Activated CD4-positive, alpha-beta T cell treated with anti-CD3 and anti-CD28 coated beads, Interleukin-2, amount 10 ng/mL, durations not matched to agents 24 days and 14 days (primary cell): ENCODE measurements at regions of chr3 and their contacts with region 1.

Region 1: GRCh38 chr3:179071550-179072397 is at the start of gene ZMAT3:
- DNase-seq: peak; percentile 96
- H3K4me3 Mint-ChIP-seq: peak within 1 kb of the TSS; percentile 99
- H3K27ac Mint-ChIP-seq: peak within 1 kb of the TSS; percentile 96
- H3K4me1 Mint-ChIP-seq: peaks cover 35% of the 10 kb centered on the region
- H3K27me3 Mint-ChIP-seq: no peaks in the 10 kb centered on the region
- total RNA-seq, gene ZMAT3: 11.8 and 13.1 TPM in 2 replicates

Region 2: GRCh38 chr3:179021119-179021903 is 50.5 kb before region 1 on chr3:
- intact Hi-C with region 1: loop called (anchors 1 kb)
- DNase-seq: no peak
- H3K4me3 Mint-ChIP-seq: peak overlapping the region; percentile 65
- H3K27ac Mint-ChIP-seq: peak overlapping the region; percentile 64
- H3K4me1 Mint-ChIP-seq: peaks cover 31% of the 10 kb centered on the region
- H3K27me3 Mint-ChIP-seq: no peaks in the 10 kb centered on the region

Region 3: GRCh38 chr3:179174316-179174715 is 102.5 kb after region 1 on chr3:
- intact Hi-C with region 1: no loop called
- DNase-seq: no peak
- H3K4me3 Mint-ChIP-seq: no peak overlapping the region
- H3K27ac Mint-ChIP-seq: no peak overlapping the region
- H3K4me1 Mint-ChIP-seq: peaks cover 15% of the 10 kb centered on the region
- H3K27me3 Mint-ChIP-seq: peaks cover 2% of the 10 kb centered on the region

Region 4: GRCh38 chr3:179464323-179465089 is 392.7 kb after region 1 on chr3:
- intact Hi-C with region 1: no loop called
- DNase-seq: peak; percentile 66
- H3K4me3 Mint-ChIP-seq: peak overlapping the region; percentile 51
- H3K27ac Mint-ChIP-seq: no peak overlapping the region
- H3K4me1 Mint-ChIP-seq: peaks cover 12% of the 10 kb centered on the region
- H3K27me3 Mint-ChIP-seq: peaks cover 7% of the 10 kb centered on the region